ENCODE measurements at regions of chr22 and their contacts with region 1.

Region 1: DNA sequence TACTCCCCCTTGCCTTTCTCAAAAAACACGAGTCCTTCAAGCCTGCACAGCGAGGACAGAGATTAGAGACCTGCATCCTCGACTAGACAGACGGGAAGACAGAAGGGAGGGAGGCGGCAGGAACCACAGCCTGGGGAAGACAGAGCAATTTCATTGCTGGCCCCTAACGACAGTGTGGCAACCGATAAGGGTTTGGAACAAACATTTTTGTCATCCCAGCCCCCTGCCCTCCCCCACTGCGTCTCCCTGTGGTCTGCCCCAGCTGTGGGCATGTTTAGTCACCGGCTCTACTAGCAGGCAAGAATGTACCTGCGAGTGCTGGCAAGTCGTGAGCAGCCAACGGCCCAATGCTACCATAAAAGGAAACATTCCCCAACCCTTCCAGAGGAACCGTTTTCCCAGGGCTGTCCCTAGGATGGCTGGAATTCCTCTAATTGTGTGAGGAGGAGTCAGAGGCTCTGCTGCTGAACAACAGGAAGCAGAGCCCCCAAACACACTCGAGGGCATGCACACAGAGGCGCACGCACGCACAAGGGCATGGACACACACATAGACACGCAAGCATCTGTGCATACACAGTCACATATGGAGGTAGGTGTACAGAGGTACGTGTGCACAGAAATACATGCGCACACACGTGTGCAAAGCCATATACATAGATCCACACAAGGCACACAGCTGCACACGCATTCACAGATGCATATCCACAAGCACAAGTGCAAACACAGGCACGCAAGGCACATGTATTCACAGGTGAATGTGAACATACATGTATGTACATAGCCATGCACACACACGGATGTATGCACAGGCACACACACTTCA is 58.3 kb downstream of the MYH9 start:
- DNase-seq: peak; percentile 81 to 97
- H3K4me3 ChIP-seq: peak overlapping the region in 2 of 3 donors; percentile 20 to 44
- H3K27ac ChIP-seq: peak overlapping the region; percentile 96 to 97
- H3K4me1 ChIP-seq: peaks cover 49 to 74% of the 10 kb centered on the region in 2 donors
- H3K27me3 ChIP-seq: no peaks in the 10 kb centered on the region
- CTCF ChIP-seq: no peak
- POLR2A ChIP-seq: peak; percentile 13

Region 2: GRCh38 chr22:36191106-36191836 is 138.2 kb before region 1 on chr22:
- intact Hi-C with region 1: no loop called
- DNase-seq: peak in 1 of 2 donors; percentile 21
- H3K4me3 ChIP-seq: no peak overlapping the region
- H3K27ac ChIP-seq: no peak overlapping the region
- H3K4me1 ChIP-seq: no peaks in the 10 kb centered on the region
- H3K27me3 ChIP-seq: no peaks in the 10 kb centered on the region
- CTCF ChIP-seq: no peak
- POLR2A ChIP-seq: no peak

Region 3: DNA sequence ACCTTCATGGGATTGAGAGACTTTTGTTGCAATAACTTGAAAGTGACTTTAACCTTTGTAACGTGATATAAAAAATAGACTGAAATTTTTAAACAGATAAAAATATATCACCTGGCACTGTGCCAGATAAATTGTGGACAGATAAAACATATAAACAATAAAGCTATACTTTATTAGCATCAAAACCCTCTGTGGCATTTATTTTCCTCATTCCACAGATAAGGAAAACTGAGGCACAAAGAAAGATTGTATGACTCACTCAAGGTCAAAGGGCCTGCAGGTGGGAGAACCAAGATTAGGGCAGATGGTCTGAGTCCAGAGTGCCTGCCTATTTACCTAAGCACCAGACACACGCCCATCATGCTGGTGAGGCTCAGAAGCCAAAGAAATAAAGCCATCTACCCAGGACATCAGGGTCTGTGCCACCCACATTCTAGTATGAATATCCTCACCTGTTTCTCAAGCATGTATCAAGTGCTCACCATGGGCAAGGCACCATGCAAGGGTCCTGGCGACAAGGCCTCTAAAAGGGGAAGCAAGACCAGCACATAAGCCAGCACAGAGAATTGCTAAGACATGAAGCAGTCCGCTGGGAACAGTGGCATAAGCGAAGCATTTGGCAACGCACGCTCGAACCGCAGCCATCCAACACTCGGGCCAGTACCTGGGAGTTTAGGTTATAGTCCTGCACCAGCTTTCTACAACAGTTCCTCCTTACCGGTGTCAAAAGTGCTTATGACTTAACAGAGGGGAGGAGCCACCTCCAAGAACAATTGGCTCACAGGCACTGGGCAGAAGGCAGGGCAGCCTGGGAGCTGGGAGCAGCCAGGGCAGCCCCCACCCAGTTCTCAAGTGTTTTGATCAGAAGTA is 40.7 kb after region 1 on chr22:
- intact Hi-C with region 1: loop called (anchors 10 kb)
- DNase-seq: peak in 1 of 2 donors; percentile 73
- H3K4me3 ChIP-seq: peak overlapping the region in 2 of 3 donors; percentile 18 to 53
- H3K27ac ChIP-seq: peak overlapping the region; percentile 92
- H3K4me1 ChIP-seq: peaks cover 34 to 87% of the 10 kb centered on the region in 2 donors
- H3K27me3 ChIP-seq: no peaks in the 10 kb centered on the region
- CTCF ChIP-seq: no peak
- POLR2A ChIP-seq: no peak